Vagina (tissue), 2 donors: ENCODE measurements at regions of chr11 and their contacts with region 1.

Region 1: DNA sequence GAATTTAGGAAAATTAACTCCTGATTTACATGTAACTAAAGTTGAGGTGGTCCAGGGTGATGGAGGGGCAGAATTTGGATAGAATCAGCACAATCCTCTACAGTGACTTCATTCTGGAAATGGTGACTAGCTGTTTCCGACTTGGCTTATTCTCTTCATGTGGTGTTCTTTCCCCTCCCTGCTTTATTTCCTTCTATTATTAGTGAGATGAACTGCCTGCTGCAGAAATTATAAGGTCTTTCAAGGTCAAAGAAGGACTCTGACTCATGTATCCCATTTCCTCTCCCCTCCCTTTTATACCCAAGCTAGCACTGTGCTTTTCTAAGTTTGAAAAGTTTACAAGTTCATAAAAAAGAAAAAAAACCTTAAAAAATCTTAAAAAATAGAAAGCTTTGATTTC is 12.2 kb upstream of the MRPL17 start:
- DNase-seq: no peak
- H3K4me3 ChIP-seq: no peak overlapping the region
- H3K27ac ChIP-seq: peak overlapping the region; percentile 53
- H3K4me1 ChIP-seq: peaks cover 27% of the 10 kb centered on the region
- H3K27me3 ChIP-seq: no peaks in the 10 kb centered on the region
- CTCF ChIP-seq: no peak
- POLR2A ChIP-seq: no peak

Region 2: GRCh38 chr11:6481012-6481923 is 214.1 kb before region 1 on chr11 and contains the starts of genes ARFIP2 and TIMM10B:
- intact Hi-C with region 1: no loop called
- DNase-seq: peak in 1 of 2 donors; percentile 98
- H3K4me3 ChIP-seq: peak within 1 kb of the TSS; percentile 66 to 70
- H3K27ac ChIP-seq: peak within 1 kb of the TSS; percentile 95
- H3K4me1 ChIP-seq: peaks cover 37% of the 10 kb centered on the region
- H3K27me3 ChIP-seq: no peaks in the 10 kb centered on the region
- CTCF ChIP-seq: no peak
- POLR2A ChIP-seq: peak; percentile 37 to 69
- total RNA-seq, gene ARFIP2: 54.0 TPM
- total RNA-seq, gene TIMM10B: 98.7 TPM

Region 3: DNA sequence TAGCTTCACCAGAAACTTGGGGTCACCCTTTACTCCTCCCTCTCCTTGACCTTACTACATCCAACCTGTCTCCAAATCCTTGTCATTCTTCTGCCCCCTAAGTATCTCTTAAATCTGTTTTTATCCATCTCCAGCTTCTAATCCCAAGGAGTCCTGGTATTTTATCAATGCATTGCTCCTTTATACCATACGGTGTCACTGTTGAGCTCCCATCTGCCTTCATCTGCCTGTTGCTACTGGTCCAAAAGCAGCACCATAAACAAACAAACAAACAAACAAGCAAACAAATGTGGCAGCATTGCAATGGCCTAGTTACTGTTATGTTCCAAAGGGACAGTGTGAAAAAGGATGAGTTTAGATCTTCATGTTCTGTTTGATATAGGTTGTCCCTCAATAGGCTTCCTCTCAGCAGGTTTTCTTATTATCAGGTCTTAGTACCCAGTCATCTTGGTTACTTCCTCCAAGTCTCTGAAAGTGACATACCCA is 164.1 kb before region 1 on chr11:
- intact Hi-C with region 1: loop called (anchors 5 kb)
- DNase-seq: no peak
- H3K4me3 ChIP-seq: no peak overlapping the region
- H3K27ac ChIP-seq: no peak overlapping the region
- H3K4me1 ChIP-seq: no peaks in the 10 kb centered on the region
- H3K27me3 ChIP-seq: no peaks in the 10 kb centered on the region
- CTCF ChIP-seq: peak; percentile 46 to 83 (median 72)
- POLR2A ChIP-seq: no peak

Region 4: GRCh38 chr11:6655020-6655789 is 40.2 kb before region 1 on chr11:
- intact Hi-C with region 1: no loop called
- DNase-seq: no peak
- H3K4me3 ChIP-seq: peak overlapping the region; percentile 57 to 72
- H3K27ac ChIP-seq: peak overlapping the region; percentile 92
- H3K4me1 ChIP-seq: peaks cover 17% of the 10 kb centered on the region
- H3K27me3 ChIP-seq: no peaks in the 10 kb centered on the region
- CTCF ChIP-seq: no peak
- POLR2A ChIP-seq: no peak